Heart left ventricle (tissue), 16 donors: ENCODE measurements at regions of chr2 and their contacts with region 1.

Region 1: GRCh38 chr2:200225951-200226350 is 80.5 kb upstream of the SPATS2L start:
- DNase-seq: peak in 1 of 5 donors; percentile 21
- ATAC-seq: peak in 2 of 4 donors; percentile 47 to 74
- H3K4me3 ChIP-seq: no peak overlapping the region
- H3K27ac ChIP-seq: peak overlapping the region in 3 of 12 donors; percentile 5 to 35 (median 24)
- H3K4me1 ChIP-seq: peaks cover 0 to 28% (median 10%) of the 10 kb centered on the region in 12 donors
- H3K27me3 ChIP-seq: no peaks in the 10 kb centered on the region
- CTCF ChIP-seq: no peak
- POLR2A ChIP-seq: no peak

Region 2: DNA sequence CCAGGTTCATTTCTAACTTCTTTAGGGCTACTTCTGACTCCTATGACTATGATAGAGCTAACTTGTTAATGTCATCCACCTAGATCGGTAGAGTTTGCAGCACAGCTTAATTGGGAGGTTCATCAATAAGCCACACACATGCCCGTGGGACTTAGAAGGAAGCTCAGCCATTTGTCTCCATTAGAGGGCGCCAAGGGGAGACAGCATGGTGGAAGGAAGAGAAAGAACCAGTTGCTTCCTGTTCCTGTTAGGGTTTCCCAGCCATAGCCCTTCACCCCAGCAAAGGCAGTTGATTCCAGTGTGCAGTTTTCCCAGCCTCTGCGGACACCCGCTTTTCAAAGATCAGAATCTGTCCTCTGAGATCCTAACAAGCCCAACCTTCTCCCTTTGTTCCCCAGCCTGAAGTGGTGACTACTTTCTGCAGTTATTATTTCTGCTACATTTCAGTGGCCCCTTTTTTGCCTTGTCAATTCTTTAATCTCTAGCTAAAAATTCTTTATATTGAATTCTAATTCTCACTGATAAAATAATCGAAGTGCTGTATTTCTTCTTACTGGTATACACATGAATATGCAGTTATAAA is 240.2 kb before region 1 on chr2:
- intact Hi-C with region 1: loop called in 1 of 10 experiments (anchors 10 kb)
- DNase-seq: peak in 4 of 5 donors; percentile 47 to 67 (median 54)
- ATAC-seq: peak; percentile 36 to 76 (median 60)
- H3K4me3 ChIP-seq: no peak overlapping the region
- H3K27ac ChIP-seq: no peak overlapping the region
- H3K4me1 ChIP-seq: peaks cover 0 to 26% (median 10%) of the 10 kb centered on the region in 12 donors
- H3K27me3 ChIP-seq: no peaks in the 10 kb centered on the region
- CTCF ChIP-seq: peak; percentile 44 to 71 (median 52)
- POLR2A ChIP-seq: no peak

Region 3: GRCh38 chr2:200148366-200148765 is 77.6 kb before region 1 on chr2:
- intact Hi-C with region 1: loop called in 1 of 10 experiments (anchors 10 kb)
- DNase-seq: no peak
- ATAC-seq: no peak
- H3K4me3 ChIP-seq: no peak overlapping the region
- H3K27ac ChIP-seq: no peak overlapping the region
- H3K4me1 ChIP-seq: no peaks in the 10 kb centered on the region
- H3K27me3 ChIP-seq: no peaks in the 10 kb centered on the region
- CTCF ChIP-seq: no peak
- POLR2A ChIP-seq: no peak

Region 4: GRCh38 chr2:200300648-200301314 is 74.8 kb after region 1 on chr2:
- intact Hi-C with region 1: loop called in 1 of 10 experiments (anchors 5 kb)
- DNase-seq: peak in 2 of 5 donors; percentile 36 to 45
- ATAC-seq: peak; percentile 69 to 88 (median 74)
- H3K4me3 ChIP-seq: no peak overlapping the region
- H3K27ac ChIP-seq: no peak overlapping the region
- H3K4me1 ChIP-seq: peaks cover 0 to 22% (median 5%) of the 10 kb centered on the region in 12 donors
- H3K27me3 ChIP-seq: no peaks in the 10 kb centered on the region
- CTCF ChIP-seq: no peak
- POLR2A ChIP-seq: no peak

Region 5: GRCh38 chr2:200471324-200471848 is 245.4 kb after region 1 on chr2:
- intact Hi-C with region 1: loop called in 1 of 10 experiments (anchors 10 kb)
- DNase-seq: no peak
- ATAC-seq: no peak
- H3K4me3 ChIP-seq: no peak overlapping the region
- H3K27ac ChIP-seq: no peak overlapping the region
- H3K4me1 ChIP-seq: peaks cover 0 to 14% (median 1%) of the 10 kb centered on the region in 12 donors
- H3K27me3 ChIP-seq: no peaks in the 10 kb centered on the region
- CTCF ChIP-seq: peak in 11 of 12 donors; percentile 22 to 61 (median 47)
- POLR2A ChIP-seq: no peak